ENCODE measurements at regions of chr2 and their contacts with region 1.

Region 1: GRCh38 chr2:96960153-96960961 is 26.0 kb downstream of the FAM178B start:
- DNase-seq: peak; percentile 89 to 94 (median 90)
- ATAC-seq: peak; percentile 93 to 98 (median 96)
- H3K4me3 ChIP-seq: no peak overlapping the region
- H3K27ac ChIP-seq: no peak overlapping the region
- H3K4me1 ChIP-seq: no peaks in the 10 kb centered on the region
- H3K27me3 ChIP-seq: no peaks in the 10 kb centered on the region
- CTCF ChIP-seq: peak; percentile 86 to 97 (median 92)
- POLR2A ChIP-seq: no peak

Region 2: GRCh38 chr2:96625571-96626552 is 334.5 kb before region 1 on chr2:
- intact Hi-C with region 1: loop called in 1 of 10 experiments (anchors 10 kb)
- DNase-seq: no peak
- ATAC-seq: peak in 2 of 4 donors; percentile 32 to 34
- H3K4me3 ChIP-seq: no peak overlapping the region
- H3K27ac ChIP-seq: peak overlapping the region in 8 of 12 donors; percentile 0 to 47 (median 20)
- H3K4me1 ChIP-seq: peaks cover 0 to 41% (median 21%) of the 10 kb centered on the region in 12 donors
- H3K27me3 ChIP-seq: no peaks in the 10 kb centered on the region
- CTCF ChIP-seq: no peak
- POLR2A ChIP-seq: no peak

Region 3: DNA sequence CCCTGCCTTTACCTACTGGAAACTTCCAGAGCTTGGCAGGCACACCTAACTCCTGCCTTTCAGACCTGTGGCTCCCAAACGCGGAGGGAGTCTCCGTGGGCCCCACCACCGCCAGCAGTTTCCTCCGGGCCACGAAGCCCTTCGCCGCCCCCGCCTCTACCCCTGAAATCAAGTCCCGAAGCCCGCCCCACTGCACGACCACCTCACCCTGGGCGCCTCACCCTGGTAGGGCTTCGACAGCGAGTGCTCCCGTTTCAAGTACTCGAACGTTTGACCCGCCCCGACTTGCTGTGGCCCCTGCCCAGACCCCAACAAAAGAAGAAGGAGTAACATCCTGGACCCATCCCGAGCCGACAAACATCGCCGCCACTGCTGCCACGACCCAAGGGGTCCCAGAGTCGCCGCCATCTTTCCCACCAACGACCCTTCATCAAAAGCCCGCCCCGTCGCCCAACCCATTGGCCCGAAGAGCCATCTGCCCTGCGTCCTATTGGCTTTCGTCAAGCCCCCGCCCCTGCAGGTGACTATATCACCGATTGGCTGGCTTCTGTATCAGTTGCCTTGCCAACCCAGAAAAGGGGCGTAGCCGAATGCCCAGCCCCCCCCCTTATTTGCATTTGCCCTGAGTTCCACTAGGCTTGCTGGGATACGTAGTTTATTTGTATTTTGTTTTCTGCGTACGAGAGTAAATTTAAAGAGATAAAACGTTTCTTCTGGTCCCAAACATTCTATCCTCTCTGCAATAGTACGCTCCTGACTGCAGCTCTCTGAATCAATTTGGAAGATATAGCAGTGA is 220.5 kb before region 1 on chr2 and contains the start of gene LMAN2L:
- intact Hi-C with region 1: loop called in 2 of 10 experiments (anchors 5 to 10 kb)
- DNase-seq: peak; percentile 97 to 99 (median 99)
- ATAC-seq: peak; percentile 99 to 100 (median 99)
- H3K4me3 ChIP-seq: peak within 1 kb of the TSS; percentile 61 to 96 (median 79)
- H3K27ac ChIP-seq: peak within 1 kb of the TSS in 11 of 12 donors; percentile 60 to 80 (median 75)
- H3K4me1 ChIP-seq: peaks cover 0 to 40% (median 26%) of the 10 kb centered on the region in 12 donors
- H3K27me3 ChIP-seq: no peaks in the 10 kb centered on the region
- CTCF ChIP-seq: no peak
- POLR2A ChIP-seq: no peak
- total RNA-seq, gene LMAN2L: 15.1 to 27.8 (median 20.5) TPM